Head of caudate nucleus (tissue), 42 donors: ENCODE measurements at regions of chr14 and their contacts with region 1.

Region 1: GRCh38 chr14:93231129-93231979 is 24.3 kb downstream of the UBR7 start:
- DNase-seq: peak; percentile 43 to 93 (median 76)

Region 2: DNA sequence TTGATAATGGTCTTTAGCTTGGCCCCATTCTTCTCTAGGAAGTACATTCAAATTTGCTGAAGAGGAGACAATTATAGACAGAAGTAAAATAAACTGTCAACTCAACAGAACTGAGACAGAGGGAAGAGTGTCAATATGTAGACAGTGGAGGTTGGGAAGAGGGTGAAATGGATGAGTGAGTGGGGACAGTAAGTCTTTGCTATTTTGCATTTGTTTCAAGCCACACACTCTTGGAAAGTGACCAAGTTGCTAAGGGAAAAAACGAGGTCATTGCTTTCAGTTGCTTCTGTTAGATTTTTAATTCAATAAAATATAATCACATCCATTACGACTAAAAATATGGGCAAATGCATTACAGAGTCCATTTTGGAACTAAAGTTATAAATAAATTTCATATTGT is 53.7 kb after region 1 on chr14:
- intact Hi-C with region 1: no loop called
- DNase-seq: no peak

Region 3: GRCh38 chr14:93629643-93630042 is 398.3 kb after region 1 on chr14:
- intact Hi-C with region 1: loop called (anchors 10 kb)
- DNase-seq: no peak